ENCODE measurements at regions of chr7 and their contacts with region 1.

Region 1: DNA sequence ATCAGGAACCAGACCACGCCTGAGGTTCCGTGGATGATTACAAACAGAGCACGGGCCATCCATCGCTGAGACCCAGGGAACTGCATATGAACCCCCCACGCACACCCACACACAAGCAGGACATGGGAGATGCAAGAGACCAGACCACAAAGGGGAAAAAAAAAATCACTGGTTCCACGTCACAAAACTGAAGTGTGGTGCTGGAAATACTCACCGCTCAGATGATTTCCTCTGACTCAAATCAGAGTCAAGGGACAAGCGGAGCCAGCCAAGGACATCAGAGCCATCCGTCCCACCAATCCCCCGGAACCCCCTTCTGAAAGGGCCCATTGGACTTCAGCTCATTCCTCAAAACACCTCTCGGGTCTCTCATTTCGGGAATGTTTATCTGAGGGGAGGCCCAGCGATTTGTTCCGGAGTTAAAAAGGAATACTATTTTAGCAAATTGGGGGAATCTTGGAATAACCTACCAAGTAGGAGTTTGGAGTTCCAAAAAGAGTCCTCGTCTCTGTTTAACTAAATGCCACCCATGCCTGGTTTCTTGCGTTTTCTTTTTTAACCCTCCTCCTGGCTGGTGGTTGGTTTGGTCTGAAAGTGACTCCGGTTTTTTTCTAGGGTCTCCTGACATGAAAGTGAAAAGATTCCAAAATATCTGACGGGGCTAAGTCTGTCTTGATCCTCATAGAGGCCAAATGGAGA is 15.0 kb downstream of the SNX8 start:
- DNase-seq: peak; percentile 92
- ATAC-seq: peak; percentile 82
- H3K4me3 ChIP-seq: peak overlapping the region; percentile 68
- H3K27ac ChIP-seq: peak overlapping the region; percentile 80
- H3K4me1 ChIP-seq: peaks cover 46% of the 10 kb centered on the region
- H3K27me3 ChIP-seq: no peaks in the 10 kb centered on the region
- CTCF ChIP-seq: no peak
- EP300 ChIP-seq: peak; percentile 69 to 77
- POLR2A ChIP-seq: peak; percentile 62
- RAD21 ChIP-seq: no peak

Region 2: GRCh38 chr7:2232766-2233520 is 66.3 kb before region 1 on chr7 and contains the start of gene MAD1L1:
- CTCF ChIA-PET with region 1: interaction called, 8 read pairs
- POLR2A ChIA-PET with region 1: interaction called, 11 read pairs
- RAD21 ChIA-PET with region 1: interaction called, 10 read pairs
- SMC1A ChIA-PET with region 1: interaction called, 5 read pairs
- in situ Hi-C with region 1: no loop called
- intact Hi-C with region 1: loop called (anchors 1 kb)
- DNase-seq: no peak
- ATAC-seq: peak; percentile 82
- H3K4me3 ChIP-seq: peak within 1 kb of the TSS; percentile 86
- H3K27ac ChIP-seq: peak within 1 kb of the TSS; percentile 86
- H3K4me1 ChIP-seq: peaks cover 13% of the 10 kb centered on the region
- H3K27me3 ChIP-seq: no peaks in the 10 kb centered on the region
- CTCF ChIP-seq: no peak
- EP300 ChIP-seq: no peak
- POLR2A ChIP-seq: peak; percentile 88
- RAD21 ChIP-seq: no peak
- polyA plus RNA-seq, gene MAD1L1: 2.2 to 5.1 TPM

Region 3: GRCh38 chr7:2248984-2249694 is 50.1 kb before region 1 on chr7:
- CTCF ChIA-PET with region 1: interaction called, 15 read pairs
- POLR2A ChIA-PET with region 1: interaction called, 5 read pairs
- RAD21 ChIA-PET with region 1: no interaction called
- SMC1A ChIA-PET with region 1: interaction called, 8 read pairs
- in situ Hi-C with region 1: no loop called
- intact Hi-C with region 1: no loop called
- DNase-seq: peak; percentile 48
- ATAC-seq: peak; percentile 67
- H3K4me3 ChIP-seq: peak overlapping the region; percentile 50; the same call in 1 of the 2 replicates
- H3K27ac ChIP-seq: peak overlapping the region; percentile 67
- H3K4me1 ChIP-seq: peaks cover 33% of the 10 kb centered on the region
- H3K27me3 ChIP-seq: no peaks in the 10 kb centered on the region
- CTCF ChIP-seq: peak in 2 of 3 experiments; percentile 12 to 54; a peak in 2 of 6 replicates
- EP300 ChIP-seq: 0 out of 4 replicates have a peak, but pooled peaks of 1 of the 2 experiments have one; percentile 13
- POLR2A ChIP-seq: peak; percentile 44; the same call in 1 of the 2 replicates
- RAD21 ChIP-seq: 0 out of 2 replicates have a peak, but pooled peaks have one; percentile 24

Region 4: GRCh38 chr7:2258661-2259365 is 40.5 kb before region 1 on chr7:
- CTCF ChIA-PET with region 1: interaction called, 11 read pairs
- POLR2A ChIA-PET with region 1: interaction called, 5 read pairs
- RAD21 ChIA-PET with region 1: interaction called, 6 read pairs
- SMC1A ChIA-PET with region 1: interaction called, 5 read pairs
- in situ Hi-C with region 1: no loop called
- intact Hi-C with region 1: no loop called
- DNase-seq: peak; percentile 50
- ATAC-seq: peak; percentile 92
- H3K4me3 ChIP-seq: no peak overlapping the region
- H3K27ac ChIP-seq: peak overlapping the region; percentile 65
- H3K4me1 ChIP-seq: peaks cover 45% of the 10 kb centered on the region
- H3K27me3 ChIP-seq: no peaks in the 10 kb centered on the region
- CTCF ChIP-seq: no peak
- EP300 ChIP-seq: peak; percentile 46 to 48; a peak in 1 of 4 replicates
- POLR2A ChIP-seq: no peak
- RAD21 ChIP-seq: no peak

Region 5: GRCh38 chr7:2270061-2270460 is 29.2 kb before region 1 on chr7:
- CTCF ChIA-PET with region 1: no interaction called
- POLR2A ChIA-PET with region 1: no interaction called
- RAD21 ChIA-PET with region 1: no interaction called
- SMC1A ChIA-PET with region 1: no interaction called
- in situ Hi-C with region 1: no loop called
- intact Hi-C with region 1: no loop called
- DNase-seq: no peak
- ATAC-seq: no peak
- H3K4me3 ChIP-seq: no peak overlapping the region
- H3K27ac ChIP-seq: no peak overlapping the region
- H3K4me1 ChIP-seq: no peaks in the 10 kb centered on the region
- H3K27me3 ChIP-seq: no peaks in the 10 kb centered on the region
- CTCF ChIP-seq: no peak
- EP300 ChIP-seq: no peak
- POLR2A ChIP-seq: no peak
- RAD21 ChIP-seq: no peak

Region 6: GRCh38 chr7:2288503-2288902 is 10.8 kb before region 1 on chr7:
- CTCF ChIA-PET with region 1: interaction called, 7 read pairs
- POLR2A ChIA-PET with region 1: interaction called, 6 read pairs
- RAD21 ChIA-PET with region 1: interaction called, 13 read pairs
- SMC1A ChIA-PET with region 1: interaction called, 21 read pairs
- in situ Hi-C with region 1: no loop called
- intact Hi-C with region 1: no loop called
- DNase-seq: no peak
- ATAC-seq: peak; percentile 95
- H3K4me3 ChIP-seq: no peak overlapping the region
- H3K27ac ChIP-seq: peak overlapping the region; percentile 70
- H3K4me1 ChIP-seq: peaks cover 18% of the 10 kb centered on the region
- H3K27me3 ChIP-seq: no peaks in the 10 kb centered on the region
- CTCF ChIP-seq: no peak
- EP300 ChIP-seq: peak in 1 of 2 experiments; percentile 39; a peak in 1 of 4 replicates
- POLR2A ChIP-seq: no peak
- RAD21 ChIP-seq: no peak

Region 7: DNA sequence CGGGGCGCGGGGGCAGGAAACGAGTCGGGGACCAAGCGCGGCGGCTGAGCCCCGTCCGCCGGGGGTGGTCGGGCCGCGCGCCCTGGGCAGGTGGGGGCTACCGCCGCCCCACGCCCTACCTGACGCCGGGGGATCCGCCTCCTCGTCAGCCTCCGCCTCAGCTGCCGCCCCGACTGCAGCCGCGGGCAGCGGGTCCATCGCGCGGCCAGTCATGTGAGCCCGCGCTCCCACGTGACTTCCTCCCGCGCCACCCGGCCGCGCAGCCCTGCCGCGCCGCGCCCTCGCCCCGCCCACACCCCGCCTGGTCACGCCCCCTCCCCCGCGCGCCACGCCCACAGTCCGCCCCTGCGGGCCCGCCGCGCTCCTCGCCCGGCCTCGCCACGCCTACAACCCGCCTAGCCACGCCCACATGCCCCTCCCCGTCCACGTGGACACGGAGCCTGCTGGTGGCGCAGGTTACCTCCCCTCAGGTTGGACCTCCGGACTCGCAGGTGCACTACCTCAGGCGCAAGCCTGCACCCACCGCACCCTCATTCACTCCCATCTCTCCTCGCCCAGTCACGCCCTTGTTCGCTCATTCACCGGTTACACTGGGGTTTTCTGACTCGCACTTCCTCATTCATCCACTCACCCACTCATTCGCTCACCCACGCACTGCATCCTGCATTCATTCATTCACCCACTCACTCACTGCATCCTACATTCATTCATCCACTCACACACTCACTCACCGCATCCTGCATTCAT is 15.1 kb after region 1 on chr7 and contains the start of gene SNX8:
- CTCF ChIA-PET with region 1: interaction called, 19 read pairs
- POLR2A ChIA-PET with region 1: interaction called, 17 read pairs
- RAD21 ChIA-PET with region 1: interaction called, 28 read pairs
- SMC1A ChIA-PET with region 1: interaction called, 22 read pairs
- in situ Hi-C with region 1: no loop called
- intact Hi-C with region 1: no loop called
- DNase-seq: no peak
- ATAC-seq: peak; percentile 77
- H3K4me3 ChIP-seq: peak within 1 kb of the TSS; percentile 99
- H3K27ac ChIP-seq: peak within 1 kb of the TSS; percentile 92
- H3K4me1 ChIP-seq: peaks cover 17% of the 10 kb centered on the region
- H3K27me3 ChIP-seq: no peaks in the 10 kb centered on the region
- CTCF ChIP-seq: no peak
- EP300 ChIP-seq: 0 out of 4 replicates have a peak, but pooled peaks of 1 of the 2 experiments have one; percentile 15
- POLR2A ChIP-seq: peak; percentile 88
- RAD21 ChIP-seq: no peak
- polyA plus RNA-seq, gene SNX8: 6.4 to 21.5 TPM

Region 8: GRCh38 chr7:2403718-2404648 is 104.7 kb after region 1 on chr7:
- CTCF ChIA-PET with region 1: no interaction called
- POLR2A ChIA-PET with region 1: no interaction called
- RAD21 ChIA-PET with region 1: no interaction called
- SMC1A ChIA-PET with region 1: interaction called, 6 read pairs
- in situ Hi-C with region 1: no loop called
- intact Hi-C with region 1: loop called (anchors 5 kb)
- DNase-seq: no peak
- ATAC-seq: peak; percentile 7
- H3K4me3 ChIP-seq: peak overlapping the region; percentile 70
- H3K27ac ChIP-seq: peak overlapping the region; percentile 84
- H3K4me1 ChIP-seq: peaks cover 42% of the 10 kb centered on the region
- H3K27me3 ChIP-seq: no peaks in the 10 kb centered on the region
- CTCF ChIP-seq: 0 out of 6 replicates have a peak, but pooled peaks of 1 of the 3 experiments have one; percentile 8
- EP300 ChIP-seq: no peak
- POLR2A ChIP-seq: no peak; the same call in 1 of the 2 replicates
- RAD21 ChIP-seq: no peak

Region 9: DNA sequence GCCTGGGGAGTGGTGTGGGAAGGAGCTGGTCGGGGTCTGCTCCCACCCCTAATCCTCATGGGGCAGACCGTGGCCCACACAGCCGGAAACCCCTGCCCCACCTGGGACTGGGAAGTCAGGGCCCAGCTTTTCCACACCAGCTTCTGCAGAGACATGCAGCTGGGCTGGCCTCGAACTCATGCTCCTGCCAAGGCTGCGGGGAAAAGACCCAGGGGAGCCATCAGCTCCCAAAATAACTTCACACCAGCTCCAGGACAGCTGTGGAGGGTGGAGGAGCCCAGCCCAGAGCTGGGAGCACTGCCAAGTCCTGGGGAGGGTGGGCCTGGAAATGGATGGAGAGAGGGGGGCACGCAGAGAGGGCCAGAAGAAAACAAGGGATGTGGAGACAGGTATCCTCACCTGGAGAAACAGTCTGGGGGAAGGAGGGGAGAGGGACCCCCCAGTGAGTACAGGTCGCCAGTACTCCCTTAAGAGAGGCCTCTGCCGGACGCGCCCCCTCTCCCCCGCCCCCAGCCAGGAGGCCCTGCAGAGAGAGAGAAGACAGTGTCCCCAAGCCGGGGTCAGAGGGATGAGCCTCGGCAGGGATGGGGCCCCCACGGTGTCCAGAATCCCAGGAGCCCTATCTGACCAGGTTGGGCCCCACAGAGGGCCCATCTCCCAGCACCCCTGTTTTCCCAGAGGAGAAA is 188.4 kb after region 1 on chr7:
- CTCF ChIA-PET with region 1: no interaction called
- POLR2A ChIA-PET with region 1: no interaction called
- RAD21 ChIA-PET with region 1: no interaction called
- SMC1A ChIA-PET with region 1: no interaction called
- in situ Hi-C with region 1: no loop called
- intact Hi-C with region 1: no loop called
- DNase-seq: no peak
- ATAC-seq: no peak
- H3K4me3 ChIP-seq: no peak overlapping the region
- H3K27ac ChIP-seq: no peak overlapping the region
- H3K4me1 ChIP-seq: no peaks in the 10 kb centered on the region
- H3K27me3 ChIP-seq: no peaks in the 10 kb centered on the region
- CTCF ChIP-seq: no peak
- EP300 ChIP-seq: no peak
- POLR2A ChIP-seq: no peak
- RAD21 ChIP-seq: no peak